Activated naive CD4-positive, alpha-beta T cell treated with anti-CD3 and anti-CD28 coated beads for 36 hours (primary cell): ENCODE measurements at regions of chr15 and their contacts with region 1.

Region 1: DNA sequence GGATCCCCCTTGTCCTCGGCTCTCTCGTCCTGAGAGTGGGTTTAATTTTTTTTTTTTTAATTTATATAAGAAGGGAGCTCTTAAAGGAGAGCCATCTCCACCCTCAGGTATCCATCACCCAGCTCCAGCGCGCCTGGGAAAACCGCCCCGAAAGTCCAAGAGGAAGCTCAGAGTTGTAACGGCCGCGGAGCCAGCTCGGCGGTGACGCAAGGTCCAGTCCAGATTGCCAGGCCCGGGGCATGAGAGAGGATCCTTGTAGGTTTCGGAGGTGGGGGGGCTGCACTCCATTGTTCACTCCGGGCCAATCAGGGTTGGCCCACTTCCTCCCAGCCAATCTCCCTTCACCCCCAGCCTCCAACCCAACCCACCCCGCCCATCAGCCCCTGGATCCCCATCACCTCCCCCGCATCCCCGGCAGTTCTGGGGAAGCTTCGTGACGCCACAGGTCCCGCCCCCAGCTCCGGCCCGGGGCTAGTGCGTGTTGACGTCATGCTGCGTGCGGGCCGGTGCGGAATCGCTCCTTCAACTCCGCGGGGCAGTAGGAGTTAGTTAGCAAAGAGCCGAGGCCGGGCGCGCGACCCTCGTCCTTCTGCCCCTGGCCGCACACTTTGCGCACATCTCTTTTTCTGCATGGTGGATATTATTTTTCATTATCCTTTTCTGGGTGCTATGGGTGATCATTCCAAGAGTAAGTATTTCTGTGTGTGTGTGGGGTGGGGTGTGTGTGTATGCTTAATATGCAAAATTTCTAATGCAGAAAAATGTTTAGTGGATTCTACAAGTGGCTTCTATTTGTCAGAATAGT is at the start of gene ISL2:
- DNase-seq: peak; percentile 66
- H3K4me3 Mint-ChIP-seq: peak within 1 kb of the TSS; percentile 73
- H3K27ac Mint-ChIP-seq: no peak within 1 kb of the TSS
- H3K4me1 Mint-ChIP-seq: peaks cover 42% of the 10 kb centered on the region
- H3K27me3 Mint-ChIP-seq: peaks cover 73% of the 10 kb centered on the region
- total RNA-seq, gene ISL2: not detected

Region 2: GRCh38 chr15:76006136-76006778 is 330.2 kb before region 1 on chr15:
- CTCF ChIA-PET with region 1: no interaction called
- intact Hi-C with region 1: no loop called
- DNase-seq: no peak
- H3K4me3 Mint-ChIP-seq: no peak overlapping the region
- H3K27ac Mint-ChIP-seq: no peak overlapping the region
- H3K4me1 Mint-ChIP-seq: no peaks in the 10 kb centered on the region
- H3K27me3 Mint-ChIP-seq: peaks cover 11% of the 10 kb centered on the region

Region 3: GRCh38 chr15:76235186-76235826 is 101.2 kb before region 1 on chr15:
- CTCF ChIA-PET with region 1: interaction called, 5 read pairs
- intact Hi-C with region 1: loop called (anchors 2 kb)
- DNase-seq: no peak
- H3K4me3 Mint-ChIP-seq: no peak overlapping the region
- H3K27ac Mint-ChIP-seq: no peak overlapping the region
- H3K4me1 Mint-ChIP-seq: no peaks in the 10 kb centered on the region
- H3K27me3 Mint-ChIP-seq: no peaks in the 10 kb centered on the region

Region 4: DNA sequence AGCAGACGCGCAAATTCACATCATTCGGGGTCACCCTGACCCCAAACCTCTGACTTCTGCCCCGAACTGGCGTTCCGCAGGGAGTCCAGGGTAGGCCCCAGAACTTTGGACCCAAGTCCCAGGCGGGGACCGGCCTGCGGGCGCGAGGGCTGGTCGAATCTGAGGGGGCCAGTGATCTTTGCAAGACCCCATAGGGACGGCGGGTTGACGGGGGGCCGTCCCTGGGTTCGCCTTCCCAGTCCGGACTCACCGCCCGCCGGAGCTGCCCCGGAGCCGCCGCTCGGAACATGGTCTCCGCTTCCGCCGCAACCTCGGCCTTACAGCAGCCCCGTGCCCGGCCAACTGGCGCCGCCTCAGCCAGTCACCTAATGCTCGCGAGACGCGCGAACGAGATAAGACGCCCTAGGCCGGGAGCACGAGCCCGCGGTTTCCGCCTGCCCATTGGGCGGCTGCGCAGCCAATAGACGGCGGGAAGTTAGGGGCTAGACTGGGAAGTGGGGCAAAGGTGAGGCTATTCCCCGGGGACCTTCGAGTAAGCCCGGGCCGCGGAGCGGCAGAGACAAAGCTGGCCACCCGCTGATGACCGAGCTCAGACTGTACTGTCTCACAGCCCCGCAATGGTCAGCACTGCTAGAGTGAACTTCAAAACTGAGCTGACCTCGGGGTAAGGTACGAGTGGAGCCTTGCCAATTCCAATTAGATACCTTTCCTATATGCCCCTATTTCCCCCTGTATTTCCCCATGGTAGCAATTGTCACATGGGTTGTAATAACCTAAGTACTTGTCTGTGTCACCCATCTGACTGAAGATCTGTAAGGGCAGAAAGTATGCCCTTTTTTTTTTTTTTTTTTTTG is 25.1 kb before region 1 on chr15 and contains the start of gene ETFA:
- CTCF ChIA-PET with region 1: no interaction called
- intact Hi-C with region 1: loop called (anchors 2 kb)
- DNase-seq: peak; percentile 97
- H3K4me3 Mint-ChIP-seq: peak within 1 kb of the TSS; percentile 87
- H3K27ac Mint-ChIP-seq: peak within 1 kb of the TSS; percentile 77
- H3K4me1 Mint-ChIP-seq: peaks cover 29% of the 10 kb centered on the region
- H3K27me3 Mint-ChIP-seq: no peaks in the 10 kb centered on the region
- total RNA-seq, gene ETFA: 158 to 166 TPM

Region 5: GRCh38 chr15:76514292-76514691 is 177.8 kb after region 1 on chr15:
- CTCF ChIA-PET with region 1: no interaction called
- intact Hi-C with region 1: no loop called
- DNase-seq: no peak
- H3K4me3 Mint-ChIP-seq: no peak overlapping the region
- H3K27ac Mint-ChIP-seq: no peak overlapping the region
- H3K4me1 Mint-ChIP-seq: no peaks in the 10 kb centered on the region
- H3K27me3 Mint-ChIP-seq: no peaks in the 10 kb centered on the region

Region 6: DNA sequence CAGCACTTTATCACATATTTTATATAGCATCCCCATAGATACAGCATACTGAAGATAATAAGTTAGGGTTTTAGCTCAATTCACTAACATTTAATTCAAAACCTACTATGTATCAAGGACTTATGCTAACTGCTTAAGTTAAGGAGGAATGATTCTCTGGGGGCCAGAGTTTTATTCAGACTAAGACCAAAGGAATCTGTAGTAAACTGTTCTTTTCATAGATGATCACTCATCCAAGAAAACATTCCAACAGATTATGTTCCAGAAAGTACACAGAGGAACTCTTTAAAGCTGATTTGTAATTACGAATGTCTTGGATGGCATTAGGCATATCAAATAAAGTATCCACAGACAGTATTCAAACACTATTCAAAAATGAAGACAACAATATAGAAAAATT is 342.3 kb after region 1 on chr15:
- CTCF ChIA-PET with region 1: no interaction called
- intact Hi-C with region 1: no loop called
- DNase-seq: no peak
- H3K4me3 Mint-ChIP-seq: no peak overlapping the region
- H3K27ac Mint-ChIP-seq: no peak overlapping the region
- H3K4me1 Mint-ChIP-seq: no peaks in the 10 kb centered on the region
- H3K27me3 Mint-ChIP-seq: no peaks in the 10 kb centered on the region